ENCODE measurements at regions of chr3 and their contacts with region 1.

Region 1: GRCh38 chr3:15205934-15206661 is at the start of gene CAPN7:
- DNase-seq: peak; percentile 95 to 98
- H3K4me3 ChIP-seq: peak within 1 kb of the TSS; percentile 90 to 98
- H3K27ac ChIP-seq: peak within 1 kb of the TSS; percentile 96 to 97
- H3K4me1 ChIP-seq: peaks cover 0 to 37% (median 16%) of the 10 kb centered on the region in 4 donors
- H3K27me3 ChIP-seq: no peaks in the 10 kb centered on the region
- CTCF ChIP-seq: peak; percentile 47 to 54

Region 2: DNA sequence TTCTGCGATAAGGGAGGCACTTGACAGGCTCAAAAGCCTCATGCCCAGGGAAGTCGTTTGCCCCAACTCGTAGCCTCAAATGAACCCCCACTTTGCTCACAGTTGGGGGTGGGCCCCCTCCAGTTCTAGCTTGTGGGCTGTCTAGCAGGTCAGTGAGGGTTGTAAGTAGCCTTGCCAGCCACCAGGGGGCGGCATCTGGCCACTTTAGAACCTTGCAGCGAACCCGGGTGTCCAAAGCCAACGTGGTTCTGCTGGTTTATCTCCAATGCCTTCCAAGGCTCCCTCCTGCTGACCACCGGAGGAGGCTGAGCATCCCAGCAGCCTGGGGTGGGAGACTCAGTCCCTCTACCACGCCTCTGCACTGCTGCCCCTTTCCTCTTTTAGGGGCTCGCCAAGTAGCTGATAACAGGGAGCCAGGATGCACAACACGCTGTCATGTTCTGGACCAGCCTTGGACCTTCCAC is 98.0 kb before region 1 on chr3:
- intact Hi-C with region 1: loop called (anchors 5 kb)
- DNase-seq: peak; percentile 41 to 82
- H3K4me3 ChIP-seq: no peak overlapping the region
- H3K27ac ChIP-seq: no peak overlapping the region
- H3K4me1 ChIP-seq: peaks cover 0 to 8% (median 6%) of the 10 kb centered on the region in 4 donors
- H3K27me3 ChIP-seq: peaks cover 0 to 5% of the 10 kb centered on the region in 2 donors
- CTCF ChIP-seq: peak; percentile 84 to 87

Region 3: DNA sequence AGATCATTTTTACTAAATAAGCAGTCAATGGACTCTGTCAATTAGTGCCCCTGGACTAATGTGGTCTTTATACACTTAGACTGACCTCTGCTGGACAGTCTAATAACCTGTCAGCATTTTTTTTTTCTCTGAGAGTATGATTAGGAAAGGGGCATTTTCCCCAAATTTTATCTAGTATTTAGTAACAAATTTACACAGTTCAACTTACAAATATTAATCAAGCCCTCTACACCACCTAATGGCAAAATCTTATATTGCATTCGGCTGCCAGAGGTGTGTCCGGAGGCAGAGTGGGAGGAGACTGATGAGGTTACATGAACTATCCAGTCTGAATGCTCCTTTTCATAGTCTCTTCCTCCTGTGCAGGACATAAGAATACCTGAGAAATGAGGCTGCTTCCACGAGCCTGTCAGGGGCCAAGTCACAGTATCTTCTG is 351.4 kb after region 1 on chr3:
- intact Hi-C with region 1: loop called (anchors 2 kb)
- DNase-seq: peak in 1 of 2 donors; percentile 60
- H3K4me3 ChIP-seq: no peak overlapping the region
- H3K27ac ChIP-seq: no peak overlapping the region
- H3K4me1 ChIP-seq: no peaks in the 10 kb centered on the region
- H3K27me3 ChIP-seq: no peaks in the 10 kb centered on the region
- CTCF ChIP-seq: peak; percentile 53 to 56